Activated naive CD4-positive, alpha-beta T cell treated with anti-CD3 and anti-CD28 coated beads for 36 hours (primary cell): ENCODE measurements at regions of chr5 and their contacts with region 1.

Region 1: DNA sequence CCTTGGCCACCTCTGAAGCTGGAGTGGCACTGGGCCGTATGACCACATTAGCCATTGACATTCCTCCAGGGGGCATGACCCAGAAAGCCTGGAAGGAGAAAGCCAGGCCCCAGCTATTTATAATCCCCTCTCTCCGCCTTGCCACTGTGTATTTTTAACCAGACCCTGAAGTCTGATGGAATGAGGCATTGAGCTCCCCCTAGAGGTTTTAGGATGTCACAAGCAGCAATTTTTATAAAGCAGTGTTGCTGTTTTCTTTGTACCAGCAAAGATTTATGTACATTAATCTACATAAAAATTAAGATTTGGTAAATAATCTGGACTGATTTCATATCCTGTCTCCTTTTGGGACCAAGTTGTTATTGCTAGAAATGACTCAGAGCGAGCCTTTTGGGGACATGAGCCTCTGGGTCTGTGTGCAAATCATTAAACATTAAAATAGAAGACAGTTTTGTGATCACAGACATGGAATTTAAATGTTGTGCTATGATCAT is 127.1 kb downstream of the TRIO start:
- DNase-seq: no peak
- H3K4me3 Mint-ChIP-seq: no peak overlapping the region
- H3K27ac Mint-ChIP-seq: no peak overlapping the region
- H3K4me1 Mint-ChIP-seq: peaks cover 4% of the 10 kb centered on the region
- H3K27me3 Mint-ChIP-seq: peaks cover 20% of the 10 kb centered on the region

Region 2: DNA sequence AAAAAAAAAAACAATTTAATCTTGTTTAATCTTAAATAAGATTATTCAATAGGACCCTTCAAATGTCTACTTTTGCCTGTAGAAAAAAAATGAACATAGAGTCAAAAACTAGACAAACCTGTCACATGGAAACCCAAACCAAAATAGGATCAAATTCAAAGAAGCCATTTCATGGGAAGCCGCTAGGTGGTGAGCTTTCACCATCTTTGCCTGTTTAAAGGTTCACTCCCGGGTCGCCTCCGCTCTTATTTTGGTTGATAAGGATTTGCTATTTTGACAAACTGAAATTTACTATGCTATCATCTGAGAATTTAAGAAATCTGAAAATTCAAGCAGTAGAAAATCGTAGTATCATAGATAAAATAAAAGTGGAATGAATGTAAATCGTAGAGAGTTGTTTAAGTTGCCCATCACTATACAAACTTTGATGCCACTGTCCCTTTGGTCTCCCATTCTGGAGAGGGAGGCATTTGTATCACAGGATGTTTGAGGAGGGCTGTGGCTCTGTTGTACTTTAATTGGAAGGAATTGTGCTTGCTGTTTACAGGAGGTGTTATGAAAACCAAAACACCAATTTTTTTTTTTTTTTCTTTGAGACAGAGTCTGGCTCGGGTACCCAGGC is 282.3 kb before region 1 on chr5:
- CTCF ChIA-PET with region 1: no interaction called
- intact Hi-C with region 1: loop called (anchors 1 kb)
- DNase-seq: peak; percentile 55
- H3K4me3 Mint-ChIP-seq: no peak overlapping the region
- H3K27ac Mint-ChIP-seq: no peak overlapping the region
- H3K4me1 Mint-ChIP-seq: no peaks in the 10 kb centered on the region
- H3K27me3 Mint-ChIP-seq: no peaks in the 10 kb centered on the region

Region 3: DNA sequence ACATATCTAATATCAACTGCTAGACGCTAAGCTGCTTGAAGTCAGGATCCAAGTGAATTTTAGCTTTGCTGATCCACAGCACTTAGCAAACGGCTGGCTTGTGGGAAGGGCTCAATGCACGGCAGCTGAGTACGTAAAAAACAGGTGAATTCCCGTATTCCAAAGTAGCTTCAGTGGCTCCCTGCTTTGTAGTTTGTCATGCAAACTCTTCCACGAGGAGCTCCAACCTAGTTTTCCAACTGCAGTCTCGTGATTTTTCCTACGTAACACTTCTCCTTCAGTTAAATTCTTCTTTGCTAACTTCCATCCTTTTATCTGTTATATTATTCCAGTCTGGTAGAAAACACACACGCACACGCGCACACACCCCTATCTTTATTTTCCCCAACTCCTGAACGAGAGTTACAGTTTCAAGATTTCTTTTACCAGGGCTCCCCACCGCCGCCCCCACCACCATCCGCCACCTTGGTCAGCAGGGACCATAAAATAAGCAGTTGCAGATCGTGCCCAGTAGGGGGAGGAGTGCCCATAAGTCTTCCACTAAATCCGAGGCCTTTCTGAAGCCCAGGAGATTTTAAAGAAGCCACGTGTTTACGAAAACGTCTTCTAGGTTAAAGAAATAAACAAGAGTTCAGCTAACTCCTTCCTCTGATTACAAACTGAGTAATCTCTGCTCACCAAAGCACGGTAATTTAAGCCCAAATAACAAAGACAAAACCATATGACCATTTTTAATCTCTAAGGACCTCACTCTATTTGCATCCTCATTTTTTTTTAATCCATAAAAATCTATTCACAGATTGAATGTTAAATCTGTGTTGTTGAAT is 161.9 kb before region 1 on chr5:
- CTCF ChIA-PET with region 1: interaction called, 3 read pairs
- intact Hi-C with region 1: loop called (anchors 1 kb)
- DNase-seq: peak; percentile 30
- H3K4me3 Mint-ChIP-seq: no peak overlapping the region
- H3K27ac Mint-ChIP-seq: no peak overlapping the region
- H3K4me1 Mint-ChIP-seq: peaks cover 10% of the 10 kb centered on the region
- H3K27me3 Mint-ChIP-seq: peaks cover 24% of the 10 kb centered on the region

Region 4: GRCh38 chr5:14212838-14213237 is 57.4 kb before region 1 on chr5:
- CTCF ChIA-PET with region 1: no interaction called
- intact Hi-C with region 1: loop called (anchors 2 kb)
- DNase-seq: no peak
- H3K4me3 Mint-ChIP-seq: no peak overlapping the region
- H3K27ac Mint-ChIP-seq: no peak overlapping the region
- H3K4me1 Mint-ChIP-seq: no peaks in the 10 kb centered on the region
- H3K27me3 Mint-ChIP-seq: peaks cover 27% of the 10 kb centered on the region

Region 5: DNA sequence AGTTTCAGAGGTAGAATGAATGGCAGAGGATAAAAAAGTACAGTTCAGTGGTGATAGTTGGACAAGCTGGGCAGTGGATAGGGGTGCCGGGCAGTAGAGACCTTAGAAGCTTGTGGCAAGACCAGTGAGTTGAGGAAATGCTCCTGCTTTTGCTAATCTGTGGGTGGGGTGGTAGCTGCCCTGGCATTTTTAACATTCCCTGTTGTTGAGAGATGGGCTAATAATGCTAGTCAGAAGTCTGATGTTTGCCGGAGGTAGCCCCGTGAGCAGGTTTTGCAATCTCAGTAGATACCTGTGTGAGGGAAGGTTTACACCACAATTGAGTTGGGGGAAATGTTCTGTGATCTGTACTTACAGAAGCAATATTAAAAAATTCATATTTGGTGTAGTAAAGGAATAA is 36.0 kb before region 1 on chr5:
- CTCF ChIA-PET with region 1: no interaction called
- intact Hi-C with region 1: no loop called
- DNase-seq: no peak
- H3K4me3 Mint-ChIP-seq: no peak overlapping the region
- H3K27ac Mint-ChIP-seq: no peak overlapping the region
- H3K4me1 Mint-ChIP-seq: no peaks in the 10 kb centered on the region
- H3K27me3 Mint-ChIP-seq: peaks cover 3% of the 10 kb centered on the region

Region 6: GRCh38 chr5:14428302-14429081 is 158.2 kb after region 1 on chr5:
- CTCF ChIA-PET with region 1: no interaction called
- intact Hi-C with region 1: no loop called
- DNase-seq: no peak
- H3K4me3 Mint-ChIP-seq: no peak overlapping the region
- H3K27ac Mint-ChIP-seq: no peak overlapping the region
- H3K4me1 Mint-ChIP-seq: peaks cover 16% of the 10 kb centered on the region
- H3K27me3 Mint-ChIP-seq: no peaks in the 10 kb centered on the region